Caco-2 (cell line): ENCODE measurements at regions of chr9 and their contacts with region 1.

Region 1: DNA sequence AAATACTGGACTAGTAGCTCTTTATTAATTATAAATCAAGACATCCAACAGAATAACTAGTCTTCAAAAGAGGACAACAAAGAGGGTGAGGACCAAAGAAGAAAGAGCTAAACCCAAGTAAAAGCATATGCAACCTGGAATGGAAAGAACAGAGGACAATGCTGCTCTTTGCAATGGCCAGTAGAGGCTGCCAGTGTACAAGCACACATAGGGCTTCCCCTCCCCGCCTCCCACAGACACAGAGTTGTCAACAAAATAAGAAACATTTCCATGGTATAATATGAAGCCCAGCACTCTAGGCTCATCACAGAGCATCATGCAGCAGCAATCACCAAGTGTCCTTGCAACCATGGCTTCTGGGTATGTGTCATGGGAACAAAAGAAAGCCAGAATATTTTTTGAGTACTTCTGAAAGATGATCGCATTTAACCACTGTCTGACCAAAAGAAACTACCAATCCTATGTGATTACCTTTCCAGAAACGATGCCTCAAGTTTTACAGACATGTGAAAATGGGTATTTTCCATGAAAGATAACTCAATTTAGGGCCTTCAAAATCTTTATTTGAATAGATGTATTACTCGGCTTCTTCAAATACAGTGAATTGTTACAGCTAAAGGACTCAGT is 58.1 kb downstream of the RFX3 start:
- DNase-seq: peak; percentile 40
- H3K4me3 ChIP-seq: no peak overlapping the region
- H3K4me3 Mint-ChIP-seq: no peak overlapping the region
- H3K27ac Mint-ChIP-seq: no peak overlapping the region
- H3K4me1 ChIP-seq: no peaks in the 10 kb centered on the region
- H3K4me1 Mint-ChIP-seq: no peaks in the 10 kb centered on the region
- H3K27me3 ChIP-seq: no peaks in the 10 kb centered on the region
- H3K27me3 Mint-ChIP-seq: no peaks in the 10 kb centered on the region
- CTCF ChIP-seq: peak; percentile 60 to 90

Region 2: DNA sequence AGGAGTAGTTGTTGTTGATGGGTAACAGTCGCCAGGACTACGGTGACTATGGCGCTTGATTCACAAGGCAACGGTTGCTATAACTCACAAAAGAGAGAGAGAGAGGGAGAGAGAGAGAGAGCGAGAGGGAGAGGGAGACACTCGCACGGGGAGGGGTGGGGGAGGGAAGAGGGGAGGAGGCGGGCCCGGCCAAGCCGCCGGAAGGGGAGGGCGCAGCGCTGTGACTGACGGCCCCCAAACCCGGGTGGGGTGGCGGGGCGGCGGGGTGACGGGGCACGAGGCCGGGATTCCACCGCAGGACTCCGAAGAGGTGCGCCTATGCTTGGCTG is 58.1 kb after region 1 on chr9 and contains the start of gene RFX3:
- CTCF ChIA-PET with region 1: interaction called, 4 read pairs
- POLR2A ChIA-PET with region 1: no interaction called
- intact Hi-C with region 1: loop called (anchors 5 kb)
- DNase-seq: peak; percentile 88
- H3K4me3 ChIP-seq: peak within 1 kb of the TSS; percentile 95
- H3K4me3 Mint-ChIP-seq: peak within 1 kb of the TSS; percentile 93
- H3K27ac Mint-ChIP-seq: peak within 1 kb of the TSS; percentile 99
- H3K4me1 ChIP-seq: peaks cover 13% of the 10 kb centered on the region; the same call in 1 of the 2 replicates
- H3K4me1 Mint-ChIP-seq: peaks cover 7% of the 10 kb centered on the region
- H3K27me3 ChIP-seq: no peaks in the 10 kb centered on the region
- H3K27me3 Mint-ChIP-seq: no peaks in the 10 kb centered on the region
- CTCF ChIP-seq: no peak
- total RNA-seq, gene RFX3: 4.2 and 4.5 TPM in 2 replicates

Region 3: DNA sequence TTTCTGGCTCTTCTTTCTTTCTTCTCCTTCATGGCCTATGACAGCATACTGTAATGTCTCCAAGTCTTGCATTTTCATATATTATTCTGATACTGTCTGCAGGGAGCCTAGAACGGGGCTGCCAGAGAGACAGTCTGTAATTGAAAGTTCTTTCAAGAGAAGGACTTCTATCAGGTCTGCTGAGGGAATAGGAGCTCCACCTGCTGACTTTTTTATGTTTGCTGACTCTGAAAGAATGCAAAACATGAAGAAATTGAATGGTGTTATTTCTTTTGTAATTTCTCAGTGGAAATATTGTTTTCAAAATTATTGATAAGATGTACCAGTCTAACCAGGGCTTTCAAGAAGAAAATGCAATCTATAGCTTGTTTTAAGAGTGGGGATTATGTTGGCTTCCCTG is 179.9 kb after region 1 on chr9:
- CTCF ChIA-PET with region 1: interaction called, 3 read pairs
- POLR2A ChIA-PET with region 1: no interaction called
- intact Hi-C with region 1: loop called (anchors 1 kb)
- DNase-seq: no peak
- H3K4me3 ChIP-seq: no peak overlapping the region
- H3K4me3 Mint-ChIP-seq: no peak overlapping the region
- H3K27ac Mint-ChIP-seq: no peak overlapping the region
- H3K4me1 ChIP-seq: no peaks in the 10 kb centered on the region
- H3K4me1 Mint-ChIP-seq: no peaks in the 10 kb centered on the region
- H3K27me3 ChIP-seq: no peaks in the 10 kb centered on the region
- H3K27me3 Mint-ChIP-seq: no peaks in the 10 kb centered on the region
- CTCF ChIP-seq: no peak